RWPE1 (cell line): ENCODE measurements at regions of chr11 and their contacts with region 1.

Region 1: GRCh38 chr11:56841210-56841810 is 92.8 kb upstream of the OR9G4 start:
- DNase-seq: peak; percentile 55
- H3K27ac ChIP-seq: no peak overlapping the region
- CTCF ChIP-seq: peak; percentile 73

Region 2: DNA sequence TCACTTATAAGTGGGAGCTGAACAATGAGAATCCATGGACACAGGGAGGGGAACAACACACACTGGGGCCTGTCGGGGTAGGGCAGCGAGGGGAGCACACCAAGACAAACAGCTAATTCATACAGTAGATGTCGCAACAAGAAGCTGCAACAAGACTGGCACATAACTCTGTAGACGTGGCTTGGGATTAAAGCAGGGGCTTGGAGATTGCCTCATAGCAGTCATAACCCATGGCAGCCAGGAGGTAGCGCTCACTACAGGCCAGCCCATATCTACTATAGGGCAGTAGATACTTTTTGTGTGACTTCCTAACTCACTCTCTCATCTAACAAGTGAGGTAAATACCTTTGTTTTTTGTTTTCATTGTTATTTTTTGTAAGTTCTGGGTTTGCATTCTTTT is 91.1 kb before region 1 on chr11:
- CTCF ChIA-PET with region 1: no interaction called
- POLR2A ChIA-PET with region 1: no interaction called
- DNase-seq: no peak
- H3K27ac ChIP-seq: no peak overlapping the region
- CTCF ChIP-seq: no peak

Region 3: DNA sequence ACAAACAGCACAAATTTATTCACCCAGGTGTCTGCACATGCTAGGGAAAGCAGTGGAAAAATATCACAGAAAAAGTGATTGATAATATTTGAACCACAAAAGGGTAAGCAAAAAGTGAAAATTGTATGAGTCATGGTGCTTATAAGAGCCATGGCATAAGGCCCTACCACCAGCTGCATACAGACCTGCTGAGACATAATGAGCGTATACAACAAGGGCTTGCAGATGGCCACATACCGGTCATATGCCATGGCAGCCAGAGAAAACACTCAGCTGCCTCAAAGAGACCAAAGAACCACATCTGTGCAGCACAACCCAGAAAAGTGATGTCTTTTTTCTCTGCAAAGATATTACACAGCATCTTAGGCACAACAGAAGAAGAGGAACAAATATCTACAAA is 21.4 kb before region 1 on chr11:
- CTCF ChIA-PET with region 1: no interaction called
- POLR2A ChIA-PET with region 1: no interaction called
- DNase-seq: no peak
- H3K27ac ChIP-seq: no peak overlapping the region
- CTCF ChIP-seq: no peak

Region 4: GRCh38 chr11:57116654-57117053 is 275.3 kb after region 1 on chr11:
- CTCF ChIA-PET with region 1: interaction called, 17 read pairs
- POLR2A ChIA-PET with region 1: no interaction called
- DNase-seq: peak; percentile 61
- H3K27ac ChIP-seq: no peak overlapping the region
- CTCF ChIP-seq: peak; percentile 56; the same call in 1 of the 2 replicates